AG04450 (cell line): ENCODE measurements at regions of chr22 and their contacts with region 1.

Region 1: DNA sequence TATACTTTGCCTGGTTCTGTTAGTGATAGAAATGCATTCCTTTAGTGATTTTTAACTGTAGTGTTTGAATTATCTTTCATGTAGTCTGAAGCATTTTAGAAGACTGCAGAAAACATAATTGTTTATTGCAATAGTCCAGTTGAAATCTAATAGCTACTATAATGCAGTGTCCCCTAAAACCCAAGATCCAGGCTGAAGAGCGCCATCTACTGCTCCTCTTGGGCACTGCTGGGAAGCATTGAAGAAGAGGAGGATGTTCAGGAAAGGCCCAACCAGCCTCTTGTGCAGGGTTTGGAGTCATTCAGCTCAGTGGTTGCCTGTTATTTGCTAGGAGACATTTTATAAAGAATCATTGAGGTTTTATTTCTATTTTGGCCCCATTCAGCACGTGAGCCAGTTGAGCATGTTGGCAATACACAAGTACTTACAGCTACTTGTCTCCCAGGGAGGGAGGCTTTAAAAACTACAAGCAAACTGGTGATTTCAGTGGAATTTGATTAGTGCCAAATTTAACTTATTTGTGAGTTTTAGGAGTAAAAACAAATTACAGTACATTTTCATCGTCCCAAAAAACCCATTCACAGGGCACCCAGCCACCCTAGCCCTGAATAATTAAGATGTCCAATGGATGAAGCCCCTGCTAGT is 74.9 kb upstream of the HORMAD2 start:
- DNase-seq: no peak
- H3K4me3 ChIP-seq: no peak overlapping the region
- H3K27ac ChIP-seq: no peak overlapping the region
- H3K27me3 ChIP-seq: no peaks in the 10 kb centered on the region
- CTCF ChIP-seq: peak; percentile 100

Region 2: DNA sequence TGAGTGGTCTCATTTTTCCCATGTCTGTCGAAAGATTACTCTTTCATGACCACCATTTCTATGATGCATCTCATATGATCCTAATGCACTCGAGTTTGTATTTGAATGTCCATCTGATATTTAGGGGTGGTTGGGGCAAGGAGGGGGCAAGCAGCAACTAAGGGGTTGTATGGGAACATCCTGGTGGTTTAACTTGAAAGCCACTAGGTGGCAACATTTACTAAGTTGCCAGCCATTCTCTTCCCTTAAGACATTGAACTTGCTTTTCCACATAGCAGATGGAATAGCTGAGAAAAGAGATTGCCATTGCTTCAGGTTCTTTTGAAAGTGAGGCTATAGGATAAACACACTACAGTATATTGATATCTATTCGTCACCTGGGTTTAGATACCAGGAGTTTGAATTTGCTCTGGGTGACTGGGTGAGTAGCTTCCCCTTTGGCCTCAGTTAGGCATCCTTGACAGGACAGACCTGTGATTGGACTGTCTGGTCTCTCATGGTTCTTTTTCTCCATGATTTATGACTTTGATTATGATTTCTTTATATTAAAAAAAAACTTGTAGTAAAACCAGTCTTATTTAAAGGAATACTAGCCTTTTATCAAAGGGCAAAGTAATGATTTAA is 369.5 kb before region 1 on chr22:
- CTCF ChIA-PET with region 1: interaction called, 10 read pairs
- POLR2A ChIA-PET with region 1: no interaction called
- DNase-seq: no peak
- H3K4me3 ChIP-seq: no peak overlapping the region
- H3K27ac ChIP-seq: no peak overlapping the region
- H3K27me3 ChIP-seq: no peaks in the 10 kb centered on the region
- CTCF ChIP-seq: peak; percentile 76

Region 3: GRCh38 chr22:29772170-29772641 is 233.1 kb before region 1 on chr22:
- CTCF ChIA-PET with region 1: interaction called, 21 read pairs
- POLR2A ChIA-PET with region 1: no interaction called
- DNase-seq: peak; percentile 38
- H3K4me3 ChIP-seq: no peak overlapping the region
- H3K27ac ChIP-seq: no peak overlapping the region
- H3K27me3 ChIP-seq: no peaks in the 10 kb centered on the region
- CTCF ChIP-seq: peak; percentile 66

Region 4: DNA sequence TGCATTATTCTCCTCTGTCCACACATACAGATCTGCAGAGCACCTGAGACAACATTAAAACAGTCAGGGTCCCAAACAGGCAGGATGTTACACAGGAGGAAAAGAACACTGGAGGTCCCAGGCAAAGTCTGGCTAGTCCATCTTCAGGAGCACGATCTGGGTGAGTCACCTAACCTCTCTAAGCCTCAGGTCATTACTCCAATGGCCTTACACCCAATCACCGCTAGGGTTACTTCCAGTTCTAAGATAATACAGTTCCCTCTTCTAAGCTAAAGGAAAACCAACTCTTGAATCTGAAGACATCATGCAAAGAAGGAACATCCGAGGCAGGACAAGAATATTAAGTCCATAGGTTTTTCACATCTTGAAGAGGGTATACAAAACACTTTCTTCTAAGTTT is 191.8 kb before region 1 on chr22:
- CTCF ChIA-PET with region 1: interaction called, 13 read pairs
- POLR2A ChIA-PET with region 1: no interaction called
- DNase-seq: no peak
- H3K4me3 ChIP-seq: no peak overlapping the region
- H3K27ac ChIP-seq: no peak overlapping the region
- H3K27me3 ChIP-seq: no peaks in the 10 kb centered on the region
- CTCF ChIP-seq: no peak

Region 5: DNA sequence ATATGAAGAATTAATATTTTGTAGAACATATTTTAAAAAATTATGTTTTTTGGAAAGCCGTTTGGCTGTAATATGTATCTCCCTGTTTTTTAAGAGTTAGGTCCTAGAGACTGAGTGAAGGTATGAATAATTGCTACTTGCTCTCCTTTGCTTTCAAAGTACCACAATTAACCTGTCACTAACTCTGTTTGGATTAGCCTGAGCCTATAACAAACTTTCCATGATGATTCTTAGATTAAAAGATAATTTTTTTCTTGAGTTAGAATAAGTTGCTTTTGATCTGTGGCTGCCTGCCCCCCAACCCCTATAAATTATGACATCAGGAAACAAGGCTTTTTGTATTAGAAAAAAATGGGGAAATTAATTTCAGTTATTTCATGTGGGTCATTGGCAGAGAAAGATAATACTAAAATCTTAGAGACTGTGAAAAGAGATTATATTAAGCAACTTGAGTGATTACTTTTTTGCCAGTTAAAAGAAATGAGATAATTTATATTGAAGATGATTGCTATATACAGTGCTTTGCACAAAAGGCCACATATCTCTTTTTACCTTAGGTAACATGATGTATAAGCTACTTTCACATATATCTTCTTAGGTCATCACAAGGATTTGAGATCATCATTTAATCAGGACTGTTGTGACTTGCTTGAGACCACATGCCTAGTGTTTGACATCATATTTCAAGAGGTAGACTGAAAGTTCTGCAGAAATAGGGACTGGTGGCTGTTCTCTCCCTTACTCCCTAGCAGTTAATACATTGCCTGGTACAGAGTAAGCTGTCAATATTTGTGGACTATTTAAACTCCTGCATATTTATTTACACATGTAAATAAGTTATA is 112.8 kb before region 1 on chr22:
- CTCF ChIA-PET with region 1: no interaction called
- POLR2A ChIA-PET with region 1: no interaction called
- DNase-seq: no peak
- H3K4me3 ChIP-seq: no peak overlapping the region
- H3K27ac ChIP-seq: no peak overlapping the region
- H3K27me3 ChIP-seq: no peaks in the 10 kb centered on the region
- CTCF ChIP-seq: no peak

Region 6: GRCh38 chr22:29907815-29908515 is 97.4 kb before region 1 on chr22:
- CTCF ChIA-PET with region 1: interaction called, 12 read pairs
- POLR2A ChIA-PET with region 1: no interaction called
- DNase-seq: peak; percentile 96
- H3K4me3 ChIP-seq: no peak overlapping the region; the same call in 1 of the 2 replicates
- H3K27ac ChIP-seq: peak overlapping the region; percentile 65
- H3K27me3 ChIP-seq: no peaks in the 10 kb centered on the region
- CTCF ChIP-seq: no peak

Region 7: DNA sequence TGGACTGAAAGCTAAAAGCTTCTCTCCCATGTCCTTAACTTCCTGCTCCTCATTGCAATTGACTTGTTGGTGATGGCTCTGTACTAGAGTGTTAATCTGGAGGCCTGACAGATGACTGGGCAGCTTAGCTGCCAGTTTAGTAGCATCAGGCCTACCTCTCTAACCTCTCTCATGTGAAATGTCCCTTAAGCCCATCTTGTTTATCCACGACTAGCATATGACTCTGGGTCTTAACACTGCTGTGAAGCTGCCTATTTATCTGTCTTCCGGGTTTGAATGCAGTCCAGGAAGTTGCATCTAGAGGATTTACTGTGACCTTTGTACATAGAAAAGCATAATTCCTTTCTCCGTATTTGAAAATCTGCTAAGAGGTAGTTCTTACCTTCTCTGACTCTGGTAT is 10.4 kb before region 1 on chr22:
- CTCF ChIA-PET with region 1: interaction called, 25 read pairs
- POLR2A ChIA-PET with region 1: no interaction called
- DNase-seq: no peak
- H3K4me3 ChIP-seq: no peak overlapping the region
- H3K27ac ChIP-seq: peak overlapping the region; percentile 34
- H3K27me3 ChIP-seq: no peaks in the 10 kb centered on the region
- CTCF ChIP-seq: no peak

Region 8: GRCh38 chr22:30089655-30089974 is 84.3 kb after region 1 on chr22:
- CTCF ChIA-PET with region 1: interaction called, 10 read pairs
- POLR2A ChIA-PET with region 1: no interaction called
- DNase-seq: no peak
- H3K4me3 ChIP-seq: no peak overlapping the region
- H3K27ac ChIP-seq: no peak overlapping the region
- H3K27me3 ChIP-seq: no peaks in the 10 kb centered on the region
- CTCF ChIP-seq: no peak